ENCODE measurements at regions of chr22 and their contacts with region 1.

Region 1: DNA sequence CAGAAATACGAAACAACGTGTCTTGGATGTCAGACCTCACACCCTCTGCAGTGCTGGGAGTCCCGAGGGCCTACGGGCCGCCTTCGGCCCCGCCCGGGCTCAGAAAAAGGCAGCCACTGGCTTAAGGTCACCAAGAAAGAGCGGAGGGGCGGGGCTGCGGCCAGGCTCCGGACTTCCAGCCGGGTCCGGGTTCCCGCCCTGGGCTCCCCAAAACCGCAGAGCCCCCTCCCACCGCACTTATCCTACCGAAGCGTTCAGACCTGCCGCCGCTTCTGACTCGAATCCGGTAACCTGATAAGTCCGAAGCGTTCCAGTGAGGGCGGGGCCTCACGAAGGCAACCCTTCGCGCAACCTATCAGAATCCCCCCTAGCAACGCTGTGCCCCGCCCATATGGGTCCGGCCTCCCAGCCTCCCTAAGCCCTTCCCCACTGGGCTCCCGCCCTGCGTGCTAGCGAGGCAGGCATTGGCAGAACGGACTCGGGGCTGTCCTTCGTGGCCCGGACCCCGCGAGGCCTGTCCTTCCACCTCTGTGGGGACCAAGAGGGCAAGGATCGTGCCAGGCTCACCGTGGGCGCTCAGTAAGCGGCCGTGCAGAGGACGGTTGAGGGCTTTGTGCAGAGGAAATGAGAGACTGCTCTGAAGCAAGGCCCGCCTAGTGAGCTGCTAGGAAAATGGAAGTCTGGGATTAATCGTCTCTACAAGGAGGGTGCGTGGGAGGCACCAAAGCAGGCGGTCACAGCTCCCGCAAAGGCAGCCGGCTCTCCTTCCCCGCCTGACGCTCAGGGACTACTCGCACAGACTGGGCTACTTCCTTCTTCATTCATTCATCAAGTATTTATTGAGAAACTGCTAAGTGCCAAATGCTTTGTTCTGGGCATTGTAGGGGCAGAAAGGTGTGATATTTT is at the start of gene NAGA:
- DNase-seq: peak; percentile 79 to 91 (median 88)
- ATAC-seq: peak; percentile 99
- H3K4me3 ChIP-seq: peak within 1 kb of the TSS; percentile 75
- H3K4me3 Mint-ChIP-seq: peak within 1 kb of the TSS; percentile 86 to 96 (median 94)
- H3K27ac ChIP-seq: peak within 1 kb of the TSS; percentile 75
- H3K27ac Mint-ChIP-seq: peak within 1 kb of the TSS; percentile 81 to 94 (median 92)
- H3K4me1 ChIP-seq: peaks cover 16 to 22% of the 10 kb centered on the region in 2 donors
- H3K4me1 Mint-ChIP-seq: peaks cover 22 to 54% (median 45%) of the 10 kb centered on the region in 7 donors
- H3K27me3 ChIP-seq: no peaks in the 10 kb centered on the region
- H3K27me3 Mint-ChIP-seq: no peaks in the 10 kb centered on the region
- total RNA-seq, gene NAGA: 7.6 to 38.8 (median 9.4) TPM

Region 2: DNA sequence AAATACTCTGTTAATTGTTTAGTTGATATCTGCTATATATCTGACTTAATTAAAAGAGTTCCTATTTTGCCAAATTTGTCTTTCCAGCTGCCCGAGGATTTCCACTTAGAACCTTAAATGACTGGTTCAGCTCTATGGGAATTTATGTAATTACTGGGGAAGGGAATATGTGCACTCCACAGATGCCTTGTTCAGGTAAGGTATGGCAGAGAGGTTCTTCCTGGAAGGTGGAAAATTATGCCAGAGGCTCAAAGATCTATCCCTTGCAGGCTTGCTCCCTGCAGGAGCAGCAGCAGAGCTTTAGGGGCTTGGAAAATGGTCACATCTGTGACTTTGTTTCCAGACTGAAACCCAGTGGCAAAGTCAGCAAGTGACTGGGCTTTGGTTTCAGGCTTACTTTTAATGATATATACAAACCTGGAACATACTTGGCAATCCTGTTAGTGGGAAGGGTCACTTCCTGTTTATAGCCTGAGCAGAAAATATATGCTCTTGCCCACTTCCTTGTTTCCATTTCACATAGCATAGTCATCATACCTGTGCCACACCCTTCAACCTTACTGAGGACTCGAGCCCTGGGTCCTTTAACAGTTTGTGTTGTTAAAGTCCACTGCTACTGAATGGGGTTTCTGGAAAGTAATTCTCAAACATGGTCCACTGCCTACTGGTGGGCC is 48.5 kb before region 1 on chr22:
- CTCF ChIA-PET with region 1: no interaction called
- POLR2A ChIA-PET with region 1: no interaction called
- intact Hi-C with region 1: loop called in 1 of 2 experiments (anchors 2 kb)
- DNase-seq: no peak
- ATAC-seq: no peak
- H3K4me3 ChIP-seq: no peak overlapping the region
- H3K4me3 Mint-ChIP-seq: peak overlapping the region in 3 of 10 donors; percentile 18 to 51 (median 34)
- H3K27ac ChIP-seq: no peak overlapping the region
- H3K27ac Mint-ChIP-seq: peak overlapping the region in 3 of 9 donors; percentile 23 to 85 (median 30)
- H3K4me1 ChIP-seq: peaks cover 6% of the 10 kb centered on the region in 2 donors
- H3K4me1 Mint-ChIP-seq: peaks cover 0 to 29% (median 13%) of the 10 kb centered on the region in 7 donors
- H3K27me3 ChIP-seq: no peaks in the 10 kb centered on the region
- H3K27me3 Mint-ChIP-seq: peaks cover 0 to 15% (median 4%) of the 10 kb centered on the region in 5 donors

Region 3: DNA sequence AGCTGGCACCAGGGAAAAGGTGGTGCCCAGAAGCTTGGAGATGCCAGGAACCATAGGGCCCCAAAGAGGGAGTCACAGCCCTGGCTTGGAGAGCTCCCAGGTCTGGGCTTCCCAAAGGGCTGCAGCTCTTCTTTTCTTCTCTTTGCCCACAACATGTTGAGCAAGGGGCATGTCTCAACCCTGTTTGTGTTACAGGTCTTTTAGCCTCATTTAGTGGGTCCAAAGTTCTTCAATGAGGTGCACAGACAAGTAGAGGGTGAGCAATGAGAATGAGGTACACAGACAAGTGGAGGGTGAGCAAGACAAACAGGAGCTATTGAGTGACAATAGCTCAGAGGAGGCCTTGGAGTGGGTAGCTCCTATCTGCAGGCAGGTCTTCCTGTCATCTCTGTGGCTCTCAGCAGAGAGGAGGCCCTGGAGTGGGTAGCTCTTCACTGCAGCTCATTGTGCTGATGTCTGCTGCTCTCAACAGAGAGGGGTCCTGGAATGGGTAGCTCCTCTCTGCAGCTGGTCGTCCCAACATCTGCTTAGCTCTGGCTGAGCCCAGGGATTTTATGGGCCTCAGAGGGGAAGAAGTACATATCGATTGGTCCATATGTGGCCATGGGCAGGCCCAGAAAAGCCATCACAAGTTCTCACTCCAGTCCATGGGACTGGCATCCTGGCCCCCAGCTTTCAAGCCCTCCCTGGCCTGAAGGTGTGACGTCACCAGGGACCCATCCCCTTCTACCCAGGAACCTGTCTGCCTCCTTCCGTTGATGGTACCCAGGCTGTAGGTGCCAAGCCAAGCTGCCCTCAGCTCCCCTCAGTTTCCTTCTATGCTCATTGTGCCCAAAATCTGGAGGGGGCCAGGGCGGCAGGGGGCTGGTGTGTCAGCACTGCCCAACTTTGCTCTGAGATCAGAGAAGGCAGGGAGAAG is 37.2 kb before region 1 on chr22:
- CTCF ChIA-PET with region 1: no interaction called
- POLR2A ChIA-PET with region 1: no interaction called
- intact Hi-C with region 1: loop called in 1 of 2 experiments (anchors 2 kb)
- DNase-seq: no peak
- ATAC-seq: no peak
- H3K4me3 ChIP-seq: no peak overlapping the region
- H3K4me3 Mint-ChIP-seq: no peak overlapping the region
- H3K27ac ChIP-seq: no peak overlapping the region
- H3K27ac Mint-ChIP-seq: peak overlapping the region in 1 of 9 donors; percentile 43
- H3K4me1 ChIP-seq: no peaks in the 10 kb centered on the region
- H3K4me1 Mint-ChIP-seq: peaks cover 0 to 27% (median 0%) of the 10 kb centered on the region in 7 donors
- H3K27me3 ChIP-seq: no peaks in the 10 kb centered on the region
- H3K27me3 Mint-ChIP-seq: peaks cover 0 to 3% (median 0%) of the 10 kb centered on the region in 5 donors